ENCODE measurements at regions of chr17 and their contacts with region 1.

Region 1: DNA sequence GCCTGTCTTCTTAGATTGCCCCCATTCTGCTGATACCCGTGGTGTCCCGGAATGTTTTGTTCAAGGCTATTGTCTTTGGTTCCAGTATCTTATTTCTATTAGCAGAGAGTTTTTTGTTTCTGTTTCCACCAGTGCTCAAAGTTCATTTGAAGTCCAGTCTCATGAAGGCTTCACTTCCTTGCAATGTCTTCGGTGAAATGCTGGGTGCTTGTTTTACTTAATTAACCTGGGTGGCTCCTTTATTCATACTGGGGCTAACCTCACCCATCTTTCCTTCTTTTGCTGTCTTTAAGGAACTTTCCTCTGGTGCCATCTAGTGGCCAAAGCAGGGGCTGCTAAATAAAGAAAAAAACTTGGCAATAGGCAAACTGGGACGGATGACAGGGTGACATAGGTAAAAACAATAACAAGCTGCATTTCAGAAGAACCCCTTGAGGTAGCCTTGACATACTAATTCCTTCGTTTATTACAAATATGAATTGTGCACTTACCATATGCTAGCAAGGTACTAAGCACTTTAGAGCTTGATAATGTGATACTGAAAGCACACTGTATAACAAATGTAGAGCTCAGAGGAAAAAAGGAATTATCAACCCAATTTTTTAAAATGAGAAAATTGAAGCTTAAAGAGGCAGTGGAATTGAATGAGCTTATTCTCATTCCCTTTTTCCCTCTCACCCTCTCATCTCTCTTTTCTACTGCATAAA is 2.8 kb upstream of the SMIM36 start:
- DNase-seq: peak; percentile 54
- ATAC-seq: peak; percentile 69
- H3K4me3 Mint-ChIP-seq: no peak overlapping the region
- H3K27ac Mint-ChIP-seq: no peak overlapping the region
- H3K4me1 Mint-ChIP-seq: peaks cover 4% of the 10 kb centered on the region
- H3K27me3 Mint-ChIP-seq: peaks cover 6% of the 10 kb centered on the region
- CTCF ChIP-seq: no peak

Region 2: GRCh38 chr17:54992797-54993639 is 521.0 kb before region 1 on chr17:
- CTCF ChIA-PET with region 1: interaction called, 45 read pairs
- POLR2A ChIA-PET with region 1: no interaction called
- intact Hi-C with region 1: loop called (anchors 1 kb)
- DNase-seq: no peak
- ATAC-seq: peak; percentile 50
- H3K4me3 Mint-ChIP-seq: no peak overlapping the region
- H3K27ac Mint-ChIP-seq: no peak overlapping the region
- H3K4me1 Mint-ChIP-seq: no peaks in the 10 kb centered on the region
- H3K27me3 Mint-ChIP-seq: no peaks in the 10 kb centered on the region
- CTCF ChIP-seq: no peak

Region 3: GRCh38 chr17:55053855-55054254 is 460.2 kb before region 1 on chr17:
- CTCF ChIA-PET with region 1: no interaction called
- POLR2A ChIA-PET with region 1: no interaction called
- intact Hi-C with region 1: loop called (anchors 5 kb)
- DNase-seq: no peak
- ATAC-seq: no peak
- H3K4me3 Mint-ChIP-seq: no peak overlapping the region
- H3K27ac Mint-ChIP-seq: no peak overlapping the region
- H3K4me1 Mint-ChIP-seq: no peaks in the 10 kb centered on the region
- H3K27me3 Mint-ChIP-seq: no peaks in the 10 kb centered on the region
- CTCF ChIP-seq: no peak

Region 4: GRCh38 chr17:55295411-55296170 is 218.4 kb before region 1 on chr17:
- CTCF ChIA-PET with region 1: interaction called, 3 read pairs
- POLR2A ChIA-PET with region 1: no interaction called
- intact Hi-C with region 1: loop called (anchors 1 kb)
- DNase-seq: peak; percentile 31
- ATAC-seq: peak; percentile 79
- H3K4me3 Mint-ChIP-seq: no peak overlapping the region
- H3K27ac Mint-ChIP-seq: no peak overlapping the region
- H3K4me1 Mint-ChIP-seq: peaks cover 22% of the 10 kb centered on the region
- H3K27me3 Mint-ChIP-seq: peaks cover 4% of the 10 kb centered on the region
- CTCF ChIP-seq: no peak

Region 5: GRCh38 chr17:55348749-55349354 is 165.2 kb before region 1 on chr17:
- CTCF ChIA-PET with region 1: interaction called, 55 read pairs
- POLR2A ChIA-PET with region 1: no interaction called
- intact Hi-C with region 1: loop called (anchors 2 kb)
- DNase-seq: no peak
- ATAC-seq: peak; percentile 37
- H3K4me3 Mint-ChIP-seq: no peak overlapping the region
- H3K27ac Mint-ChIP-seq: no peak overlapping the region
- H3K4me1 Mint-ChIP-seq: peaks cover 3% of the 10 kb centered on the region
- H3K27me3 Mint-ChIP-seq: peaks cover 5% of the 10 kb centered on the region
- CTCF ChIP-seq: peak; percentile 50

Region 6: GRCh38 chr17:55356434-55357328 is 157.4 kb before region 1 on chr17:
- CTCF ChIA-PET with region 1: interaction called, 55 read pairs
- POLR2A ChIA-PET with region 1: no interaction called
- intact Hi-C with region 1: loop called (anchors 1 kb)
- DNase-seq: no peak
- ATAC-seq: peak; percentile 91
- H3K4me3 Mint-ChIP-seq: no peak overlapping the region
- H3K27ac Mint-ChIP-seq: no peak overlapping the region
- H3K4me1 Mint-ChIP-seq: peaks cover 2% of the 10 kb centered on the region
- H3K27me3 Mint-ChIP-seq: peaks cover 17% of the 10 kb centered on the region
- CTCF ChIP-seq: no peak

Region 7: GRCh38 chr17:55437159-55437605 is 76.9 kb before region 1 on chr17:
- CTCF ChIA-PET with region 1: no interaction called
- POLR2A ChIA-PET with region 1: no interaction called
- intact Hi-C with region 1: loop called (anchors 1 kb)
- DNase-seq: peak; percentile 36
- ATAC-seq: peak; percentile 87
- H3K4me3 Mint-ChIP-seq: peak overlapping the region; percentile 57
- H3K27ac Mint-ChIP-seq: peak overlapping the region; percentile 85
- H3K4me1 Mint-ChIP-seq: peaks cover 51% of the 10 kb centered on the region
- H3K27me3 Mint-ChIP-seq: no peaks in the 10 kb centered on the region
- CTCF ChIP-seq: no peak